GM12878 (cell line): ENCODE measurements at regions of chr20 and their contacts with region 1.

Region 1: DNA sequence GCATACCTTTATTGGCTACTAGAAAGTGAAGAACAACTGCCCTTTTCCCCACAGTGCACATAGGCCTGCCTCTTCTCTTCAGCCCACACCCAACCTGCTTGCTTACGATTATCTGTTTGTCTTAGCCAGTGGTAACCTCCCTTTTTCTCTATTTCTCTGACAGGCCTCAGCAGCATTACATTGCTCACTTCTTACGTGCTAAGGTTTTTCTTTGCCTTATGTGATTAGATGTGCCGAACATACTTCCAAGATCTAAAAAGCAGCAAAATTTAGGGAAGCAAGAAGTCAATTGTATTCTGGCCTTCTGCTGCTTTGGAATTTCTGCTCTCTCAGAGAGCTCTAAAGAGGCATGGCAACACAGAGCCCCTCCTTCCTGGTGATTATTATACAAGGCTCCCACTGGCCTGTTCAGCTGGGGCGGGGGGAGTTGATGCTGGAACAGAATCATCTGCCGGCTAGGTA is 7.0 kb downstream of the B4GALT5 start:
- DNase-seq: no peak
- ATAC-seq: peak; percentile 32
- H3K4me3 ChIP-seq: 0 out of 2 replicates have a peak overlapping the region, but pooled peaks have one; percentile 1
- H3K27ac ChIP-seq: peak overlapping the region; percentile 67
- H3K4me1 ChIP-seq: peaks cover 15% of the 10 kb centered on the region
- H3K27me3 ChIP-seq: no peaks in the 10 kb centered on the region
- CTCF ChIP-seq: no peak
- EP300 ChIP-seq: no peak
- POLR2A ChIP-seq: no peak
- RAD21 ChIP-seq: no peak

Region 2: GRCh38 chr20:49620364-49621240 is 86.1 kb before region 1 on chr20:
- CTCF ChIA-PET with region 1: no interaction called
- POLR2A ChIA-PET with region 1: interaction called, 3 read pairs
- RAD21 ChIA-PET with region 1: interaction called, 5 read pairs
- SMC1A ChIA-PET with region 1: interaction called, 9 read pairs
- in situ Hi-C with region 1: no loop called
- intact Hi-C with region 1: loop called (anchors 2 kb)
- DNase-seq: peak; percentile 100
- ATAC-seq: peak; percentile 92
- H3K4me3 ChIP-seq: peak overlapping the region; percentile 8; the same call in 1 of the 2 replicates
- H3K27ac ChIP-seq: peak overlapping the region; percentile 57
- H3K4me1 ChIP-seq: peaks cover 37% of the 10 kb centered on the region
- H3K27me3 ChIP-seq: no peaks in the 10 kb centered on the region
- CTCF ChIP-seq: no peak
- EP300 ChIP-seq: peak; percentile 91 to 92
- POLR2A ChIP-seq: no peak
- RAD21 ChIP-seq: peak; percentile 17; the same call in 1 of the 2 replicates

Region 3: GRCh38 chr20:49690899-49691620 is 15.6 kb before region 1 on chr20:
- CTCF ChIA-PET with region 1: interaction called, 7 read pairs
- POLR2A ChIA-PET with region 1: interaction called, 11 read pairs
- RAD21 ChIA-PET with region 1: interaction called, 49 read pairs
- SMC1A ChIA-PET with region 1: interaction called, 51 read pairs
- in situ Hi-C with region 1: no loop called
- intact Hi-C with region 1: no loop called
- DNase-seq: no peak
- ATAC-seq: peak; percentile 42
- H3K4me3 ChIP-seq: no peak overlapping the region
- H3K27ac ChIP-seq: peak overlapping the region; percentile 12; the same call in 1 of the 2 replicates
- H3K4me1 ChIP-seq: peaks cover 52% of the 10 kb centered on the region
- H3K27me3 ChIP-seq: no peaks in the 10 kb centered on the region
- CTCF ChIP-seq: no peak
- EP300 ChIP-seq: no peak
- POLR2A ChIP-seq: no peak
- RAD21 ChIP-seq: no peak

Region 4: DNA sequence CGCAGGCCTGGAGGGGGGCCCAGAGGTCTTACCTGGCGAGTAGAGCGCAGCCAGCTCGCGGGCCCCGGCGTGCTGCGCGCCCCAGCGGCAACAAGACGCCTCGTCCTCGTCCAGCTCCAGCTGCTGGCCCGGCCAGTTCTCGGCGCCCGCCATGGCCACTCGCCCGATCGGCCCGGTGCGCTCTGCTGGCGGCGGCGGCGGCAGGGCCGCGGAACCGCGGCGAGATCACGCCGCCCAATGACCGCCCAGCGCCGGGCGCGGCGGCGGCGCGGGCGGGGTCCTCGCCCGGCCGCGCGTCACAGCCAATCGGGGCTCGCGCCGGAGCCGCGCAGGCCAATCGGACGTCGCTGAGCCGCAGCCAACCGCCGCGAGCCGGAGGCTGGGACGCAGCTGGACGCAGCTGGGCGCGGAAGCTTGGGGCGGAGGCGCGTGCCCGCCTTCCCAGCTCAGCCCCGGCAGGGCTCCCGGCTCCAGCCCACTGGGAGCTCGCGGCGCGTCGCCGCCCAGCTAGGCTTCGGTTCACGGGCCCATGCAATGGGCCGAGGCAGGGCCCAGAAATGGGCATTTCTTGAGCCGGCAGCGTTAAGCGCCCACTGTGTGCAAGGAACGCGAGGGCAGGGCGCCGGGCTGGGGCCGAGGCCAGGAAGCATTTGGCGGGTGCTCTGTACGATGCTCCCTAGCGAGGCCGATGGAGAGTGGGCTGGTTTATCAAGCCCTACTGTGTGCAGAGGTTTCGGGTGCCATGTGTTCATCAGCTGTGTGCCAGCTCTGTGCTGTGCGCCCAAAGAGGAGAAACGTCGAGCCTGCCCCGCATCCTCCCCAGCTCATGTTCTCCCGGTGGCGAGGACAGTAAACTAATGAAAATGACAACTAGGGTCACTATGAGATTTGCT is 447.1 kb after region 1 on chr20 and contains the start of gene PEDS1:
- CTCF ChIA-PET with region 1: no interaction called
- POLR2A ChIA-PET with region 1: no interaction called
- RAD21 ChIA-PET with region 1: no interaction called
- SMC1A ChIA-PET with region 1: no interaction called
- in situ Hi-C with region 1: no loop called
- intact Hi-C with region 1: no loop called
- DNase-seq: peak; percentile 45
- ATAC-seq: peak; percentile 98
- H3K4me3 ChIP-seq: peak within 1 kb of the TSS; percentile 98
- H3K27ac ChIP-seq: peak within 1 kb of the TSS; percentile 75
- H3K4me1 ChIP-seq: peaks cover 8% of the 10 kb centered on the region
- H3K27me3 ChIP-seq: no peaks in the 10 kb centered on the region
- CTCF ChIP-seq: no peak
- EP300 ChIP-seq: 0 out of 4 replicates have a peak, but pooled peaks of 1 of the 2 experiments have one; percentile 17
- POLR2A ChIP-seq: peak; percentile 94
- RAD21 ChIP-seq: no peak
- polyA plus RNA-seq, gene PEDS1: 1.7 to 4.3 TPM